ENCODE measurements at regions of chr15 and their contacts with region 1.

Region 1: DNA sequence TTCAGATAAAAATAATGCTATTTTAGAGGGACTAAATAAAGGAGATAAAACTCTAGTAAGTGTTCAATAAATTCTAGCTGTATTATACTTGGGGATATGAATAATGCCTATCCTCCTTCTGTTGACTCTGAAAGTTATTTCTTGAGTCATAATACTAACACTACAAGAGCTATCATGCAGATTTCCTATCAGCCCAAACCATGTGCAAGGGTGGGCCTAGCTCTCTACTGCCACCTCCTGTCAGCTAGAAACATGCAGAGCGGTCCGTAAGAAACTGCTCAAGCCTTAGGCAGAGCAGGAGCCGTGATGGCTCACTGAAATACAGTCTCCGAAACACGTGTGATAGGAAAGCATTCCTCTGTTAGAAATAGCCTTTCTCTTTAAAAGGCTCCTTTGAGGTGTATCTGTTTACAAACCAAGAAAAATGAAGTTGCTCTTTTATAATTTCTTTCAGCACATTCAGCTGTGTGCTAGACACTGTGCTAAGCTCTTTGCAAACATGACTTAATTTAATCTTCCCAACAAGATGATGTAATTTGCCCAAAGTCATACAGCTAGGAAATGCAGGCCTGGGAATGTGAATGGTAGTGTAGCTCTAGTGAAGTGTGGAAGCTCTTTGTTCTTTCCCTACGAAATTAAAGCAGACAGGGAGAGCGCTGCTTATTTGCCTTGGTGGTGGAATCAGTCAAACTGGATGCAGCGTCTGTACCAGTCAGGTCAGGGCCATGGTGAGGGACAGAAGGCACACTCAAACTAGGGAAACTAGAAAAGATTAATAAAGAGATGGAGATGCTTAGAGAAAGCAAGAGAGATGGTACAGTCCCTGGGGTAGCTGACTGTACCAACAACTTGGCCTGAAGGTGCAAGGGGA is 43.1 kb downstream of the MTHFS start:
- DNase-seq: peak; percentile 71 to 90
- ATAC-seq: peak; percentile 98 to 99
- H3K4me3 ChIP-seq: no peak overlapping the region
- H3K27ac ChIP-seq: peak overlapping the region; percentile 10 to 42; a peak in 4 of 6 replicates
- H3K4me1 ChIP-seq: peaks cover 14% of the 10 kb centered on the region
- CTCF ChIP-seq: peak; percentile 98
- EP300 ChIP-seq: no peak
- POLR2A ChIP-seq: no peak
- RAD21 ChIP-seq: peak; percentile 91 to 92

Region 2: GRCh38 chr15:79185199-79185598 is 668.5 kb before region 1 on chr15:
- CTCF ChIA-PET with region 1: no interaction called
- POLR2A ChIA-PET with region 1: no interaction called
- DNase-seq: peak in 1 of 2 experiments; percentile 39
- ATAC-seq: peak; percentile 58 to 77; a peak in 5 of 6 replicates
- H3K4me3 ChIP-seq: no peak overlapping the region
- H3K27ac ChIP-seq: no peak overlapping the region
- H3K4me1 ChIP-seq: no peaks in the 10 kb centered on the region
- CTCF ChIP-seq: no peak
- EP300 ChIP-seq: no peak
- POLR2A ChIP-seq: no peak
- RAD21 ChIP-seq: no peak

Region 3: DNA sequence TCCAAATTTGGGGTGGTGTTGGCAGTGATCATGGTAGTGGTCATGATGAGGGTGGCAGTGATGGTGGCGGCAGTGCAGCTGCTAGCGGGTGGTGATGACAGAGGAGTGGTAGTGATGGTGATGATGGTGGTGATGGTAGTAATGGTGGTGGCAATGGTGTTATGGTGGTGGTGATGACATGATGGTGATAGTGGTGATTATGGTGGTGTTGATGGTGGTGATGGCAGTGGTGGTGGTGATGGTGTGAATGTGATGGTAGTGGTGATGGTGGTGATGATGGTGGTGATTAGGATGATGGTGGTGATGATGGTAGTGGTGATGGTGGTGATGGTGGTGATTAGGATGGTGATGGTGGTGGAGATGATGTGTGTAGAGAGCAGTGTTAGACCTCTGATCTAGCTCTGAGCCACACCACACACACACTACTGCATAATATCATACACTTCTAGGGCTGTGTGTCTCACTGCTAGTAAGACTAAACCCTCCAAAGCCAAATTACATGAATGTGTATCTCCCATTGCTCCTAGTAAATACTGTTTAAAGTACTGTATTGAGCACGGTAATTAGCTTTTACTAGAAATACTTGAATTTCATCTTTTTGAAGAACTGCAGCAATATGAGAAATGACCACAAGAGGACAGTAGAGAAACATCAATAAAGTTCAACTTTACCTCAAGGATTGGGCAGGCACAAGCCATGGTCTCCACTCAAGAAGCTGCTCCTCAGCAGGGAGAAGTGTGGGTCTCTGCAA is 514.0 kb before region 1 on chr15:
- CTCF ChIA-PET with region 1: interaction called, 75 read pairs
- POLR2A ChIA-PET with region 1: no interaction called
- DNase-seq: peak; percentile 47 to 57
- ATAC-seq: peak; percentile 70 to 81
- H3K4me3 ChIP-seq: no peak overlapping the region
- H3K27ac ChIP-seq: no peak overlapping the region
- H3K4me1 ChIP-seq: no peaks in the 10 kb centered on the region
- CTCF ChIP-seq: peak; percentile 92
- EP300 ChIP-seq: no peak
- POLR2A ChIP-seq: no peak
- RAD21 ChIP-seq: peak; percentile 82 to 83

Region 4: GRCh38 chr15:79394231-79394630 is 459.5 kb before region 1 on chr15:
- CTCF ChIA-PET with region 1: interaction called, 15 read pairs
- POLR2A ChIA-PET with region 1: no interaction called
- DNase-seq: no peak
- ATAC-seq: no peak
- H3K4me3 ChIP-seq: no peak overlapping the region
- H3K27ac ChIP-seq: no peak overlapping the region
- H3K4me1 ChIP-seq: no peaks in the 10 kb centered on the region
- CTCF ChIP-seq: no peak
- EP300 ChIP-seq: no peak
- POLR2A ChIP-seq: no peak
- RAD21 ChIP-seq: no peak

Region 5: GRCh38 chr15:79769069-79769481 is 84.6 kb before region 1 on chr15:
- CTCF ChIA-PET with region 1: interaction called, 15 read pairs
- POLR2A ChIA-PET with region 1: no interaction called
- DNase-seq: peak; percentile 51 to 63
- ATAC-seq: peak; percentile 85 to 94
- H3K4me3 ChIP-seq: no peak overlapping the region
- H3K27ac ChIP-seq: no peak overlapping the region
- H3K4me1 ChIP-seq: peaks cover 6% of the 10 kb centered on the region; the same call in 1 of the 3 replicates
- CTCF ChIP-seq: peak; percentile 51
- EP300 ChIP-seq: no peak
- POLR2A ChIP-seq: no peak
- RAD21 ChIP-seq: peak; percentile 67 to 78

Region 6: DNA sequence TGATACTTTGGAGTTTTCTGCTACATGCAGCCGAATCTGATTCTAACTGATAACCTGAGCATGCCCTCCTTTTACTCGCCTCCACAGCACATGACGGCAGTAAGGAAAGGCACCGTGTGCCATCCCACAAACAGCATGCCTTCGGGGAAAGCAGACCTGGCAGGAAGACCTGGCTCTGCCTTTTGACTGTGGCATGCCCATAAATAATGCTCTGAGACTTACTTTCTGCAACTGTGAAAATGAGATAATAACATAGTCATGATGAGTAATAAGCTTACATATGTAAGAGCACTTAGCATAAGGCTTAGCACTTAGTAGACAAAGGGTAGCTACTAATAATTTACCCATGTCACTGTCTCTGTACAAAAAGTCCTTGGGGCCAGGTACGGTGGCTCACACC is 10.2 kb after region 1 on chr15:
- CTCF ChIA-PET with region 1: interaction called, 80 read pairs
- POLR2A ChIA-PET with region 1: interaction called, 6 read pairs
- DNase-seq: no peak
- ATAC-seq: no peak
- H3K4me3 ChIP-seq: no peak overlapping the region
- H3K27ac ChIP-seq: no peak overlapping the region
- H3K4me1 ChIP-seq: no peaks in the 10 kb centered on the region
- CTCF ChIP-seq: no peak
- EP300 ChIP-seq: no peak
- POLR2A ChIP-seq: no peak
- RAD21 ChIP-seq: no peak